ENCODE measurements at regions of chr20 and their contacts with region 1.

Region 1: GRCh38 chr20:62953839-62954703 is 1.6 kb downstream of the SLC17A9 start:
- DNase-seq: peak; percentile 94
- ATAC-seq: peak; percentile 82
- H3K4me3 ChIP-seq: peak overlapping the region; percentile 23 to 62 (median 54)
- H3K4me3 Mint-ChIP-seq: peak overlapping the region; percentile 85
- H3K27ac ChIP-seq: peak overlapping the region; percentile 82 to 91
- H3K27ac Mint-ChIP-seq: peak overlapping the region; percentile 92
- H3K4me1 ChIP-seq: peaks cover 31 to 47% of the 10 kb centered on the region in 2 donors
- H3K4me1 Mint-ChIP-seq: peaks cover 44% of the 10 kb centered on the region
- H3K27me3 ChIP-seq: no peaks in the 10 kb centered on the region
- H3K27me3 Mint-ChIP-seq: no peaks in the 10 kb centered on the region
- CTCF ChIP-seq: no peak

Region 2: GRCh38 chr20:62182613-62183425 is 771.3 kb before region 1 on chr20 and contains the start of gene MTG2:
- CTCF ChIA-PET with region 1: no interaction called
- POLR2A ChIA-PET with region 1: no interaction called
- intact Hi-C with region 1: loop called (anchors 5 kb)
- DNase-seq: peak; percentile 96
- ATAC-seq: peak; percentile 90
- H3K4me3 ChIP-seq: peak within 1 kb of the TSS; percentile 81 to 88 (median 84)
- H3K4me3 Mint-ChIP-seq: peak within 1 kb of the TSS; percentile 97
- H3K27ac ChIP-seq: peak within 1 kb of the TSS; percentile 86 to 97
- H3K27ac Mint-ChIP-seq: peak within 1 kb of the TSS; percentile 98
- H3K4me1 ChIP-seq: peaks cover 13 to 18% of the 10 kb centered on the region in 2 donors
- H3K4me1 Mint-ChIP-seq: peaks cover 39% of the 10 kb centered on the region
- H3K27me3 ChIP-seq: no peaks in the 10 kb centered on the region
- H3K27me3 Mint-ChIP-seq: no peaks in the 10 kb centered on the region
- CTCF ChIP-seq: no peak
- total RNA-seq, gene MTG2: 47.6 and 48.4 TPM in 2 replicates

Region 3: DNA sequence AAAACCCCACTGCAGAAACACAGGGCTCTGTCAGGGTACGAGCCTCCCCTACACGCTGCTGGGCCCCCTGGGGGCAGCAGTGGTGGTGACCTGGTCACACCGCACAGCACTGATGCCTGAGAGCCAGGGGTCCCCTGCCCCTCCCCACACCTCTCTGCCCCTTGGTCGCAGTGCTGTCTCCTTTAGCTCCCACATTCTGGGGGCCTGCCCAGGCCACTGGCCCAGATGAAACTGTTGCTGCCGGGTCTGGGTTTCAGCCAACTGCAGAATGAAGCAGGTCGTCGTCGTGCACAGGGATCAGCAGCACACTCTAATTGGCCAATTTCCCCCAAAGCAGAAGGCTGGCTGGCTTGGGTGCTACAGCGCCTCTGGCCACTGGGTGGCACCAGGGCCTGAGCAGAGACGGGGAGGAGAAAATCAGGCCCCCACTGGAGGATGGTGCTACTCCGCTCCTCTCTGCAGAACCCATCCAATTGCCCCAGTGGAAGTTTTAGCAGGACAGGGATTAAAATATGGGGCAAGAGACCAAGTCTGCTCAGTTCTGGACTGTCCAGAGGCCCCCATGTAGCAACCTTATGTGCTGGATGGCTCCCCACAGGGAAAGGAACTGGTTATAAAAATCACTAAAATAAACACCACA is 53.9 kb before region 1 on chr20:
- CTCF ChIA-PET with region 1: interaction called, 4 read pairs
- POLR2A ChIA-PET with region 1: no interaction called
- intact Hi-C with region 1: loop called (anchors 2 kb)
- DNase-seq: peak; percentile 82
- ATAC-seq: peak; percentile 96
- H3K4me3 ChIP-seq: no peak overlapping the region
- H3K4me3 Mint-ChIP-seq: peak overlapping the region; percentile 41
- H3K27ac ChIP-seq: no peak overlapping the region
- H3K27ac Mint-ChIP-seq: peak overlapping the region; percentile 90
- H3K4me1 ChIP-seq: peaks cover 12 to 20% of the 10 kb centered on the region in 2 donors
- H3K4me1 Mint-ChIP-seq: peaks cover 30% of the 10 kb centered on the region
- H3K27me3 ChIP-seq: no peaks in the 10 kb centered on the region
- H3K27me3 Mint-ChIP-seq: no peaks in the 10 kb centered on the region
- CTCF ChIP-seq: peak; percentile 89

Region 4: DNA sequence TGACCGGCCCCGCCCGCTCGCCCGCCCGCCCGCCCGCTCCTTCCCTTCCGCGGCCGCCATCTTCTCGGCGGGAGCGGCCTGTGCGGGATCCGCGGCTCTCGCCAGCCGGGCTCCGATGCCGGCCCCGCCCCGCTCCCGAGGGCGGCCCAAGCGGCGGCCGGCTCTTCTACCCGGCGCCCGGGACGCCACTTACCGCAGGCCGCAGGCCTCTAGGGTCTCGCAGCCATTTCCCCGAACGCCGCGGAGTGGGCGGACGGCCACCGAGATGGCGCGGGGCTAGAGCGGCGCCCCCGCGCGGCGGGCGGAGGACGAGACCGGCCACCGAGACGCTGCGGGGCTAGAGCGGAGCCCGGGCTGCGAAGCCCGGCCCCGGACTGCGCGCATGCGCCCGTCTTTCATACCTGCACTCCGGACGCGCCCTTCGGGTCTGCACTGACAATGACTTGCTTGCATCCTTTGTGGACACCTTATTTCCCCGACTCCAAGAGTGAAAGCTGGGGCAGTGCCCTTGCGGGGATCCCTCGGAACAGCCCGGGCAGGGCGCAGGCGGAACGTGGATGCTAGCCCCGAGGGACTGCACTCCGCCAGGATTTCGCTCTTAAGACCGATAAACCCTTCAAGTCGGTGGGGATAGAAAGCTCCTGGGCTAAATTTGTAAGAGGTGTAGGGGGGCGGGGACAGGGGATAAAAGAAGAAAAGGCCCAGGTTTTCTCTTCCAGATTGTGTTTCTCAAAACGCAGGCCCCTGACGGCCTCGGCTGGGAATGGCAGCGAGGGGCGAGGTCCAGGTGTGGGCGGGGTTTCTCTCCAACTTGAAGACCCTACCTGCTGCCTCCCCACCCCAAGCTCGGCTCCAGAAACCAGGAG is 27.6 kb before region 1 on chr20 and contains the start of gene DIDO1:
- CTCF ChIA-PET with region 1: interaction called, 6 read pairs
- POLR2A ChIA-PET with region 1: interaction called, 15 read pairs
- intact Hi-C with region 1: loop called (anchors 1 kb)
- DNase-seq: peak; percentile 94
- ATAC-seq: peak; percentile 89
- H3K4me3 ChIP-seq: peak within 1 kb of the TSS; percentile 86 to 99 (median 96)
- H3K4me3 Mint-ChIP-seq: peak within 1 kb of the TSS; percentile 95
- H3K27ac ChIP-seq: peak within 1 kb of the TSS; percentile 79 to 92
- H3K27ac Mint-ChIP-seq: peak within 1 kb of the TSS; percentile 94
- H3K4me1 ChIP-seq: peaks cover 55 to 73% of the 10 kb centered on the region in 2 donors
- H3K4me1 Mint-ChIP-seq: peaks cover 75% of the 10 kb centered on the region
- H3K27me3 ChIP-seq: no peaks in the 10 kb centered on the region
- H3K27me3 Mint-ChIP-seq: no peaks in the 10 kb centered on the region
- CTCF ChIP-seq: peak; percentile 75
- total RNA-seq, gene DIDO1: 124 and 128 TPM in 2 replicates

Region 5: DNA sequence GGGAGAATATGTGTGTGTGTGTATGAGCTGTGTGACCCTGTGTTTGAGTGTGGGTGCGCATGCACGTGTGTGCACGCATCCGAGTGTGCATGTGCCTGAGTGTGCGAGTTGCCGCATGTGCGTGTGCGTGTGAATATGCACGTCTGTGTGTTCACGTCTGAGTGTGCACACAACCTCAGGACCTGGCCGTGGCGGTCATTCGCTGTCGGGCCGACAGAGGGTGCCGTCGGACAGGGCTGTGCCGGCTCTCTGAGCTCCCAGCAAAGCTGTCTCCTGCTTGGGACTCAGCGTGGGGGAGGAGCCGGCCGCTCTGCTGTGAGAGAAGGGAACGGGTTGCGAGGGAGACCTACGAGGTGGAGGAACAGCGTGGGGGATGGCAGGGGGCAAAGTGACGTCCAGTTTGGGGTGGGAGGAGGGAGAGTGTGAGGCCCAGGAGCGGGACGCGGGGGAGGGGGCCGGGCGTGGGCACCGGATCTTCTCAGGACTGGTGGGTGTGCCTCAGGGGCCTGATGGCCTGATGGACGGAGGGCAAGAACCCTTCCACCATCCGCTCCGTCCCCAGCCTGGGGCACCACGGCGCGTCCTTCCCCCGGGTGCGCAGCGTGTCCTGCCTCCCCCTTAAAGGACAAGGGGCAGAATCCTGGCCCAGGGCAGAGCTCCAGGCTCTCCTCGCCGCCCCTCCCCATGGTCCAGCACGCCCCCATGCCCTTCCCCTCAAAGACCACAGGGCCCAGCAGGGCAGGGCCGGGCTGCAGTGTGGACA is 18.4 kb after region 1 on chr20:
- CTCF ChIA-PET with region 1: interaction called, 24 read pairs
- POLR2A ChIA-PET with region 1: interaction called, 8 read pairs
- intact Hi-C with region 1: loop called (anchors 1 kb)
- DNase-seq: peak; percentile 88
- ATAC-seq: peak; percentile 96
- H3K4me3 ChIP-seq: peak overlapping the region in 3 of 5 experiments; percentile 38 to 49 (median 45)
- H3K4me3 Mint-ChIP-seq: peak overlapping the region; percentile 82
- H3K27ac ChIP-seq: no peak overlapping the region
- H3K27ac Mint-ChIP-seq: peak overlapping the region; percentile 37
- H3K4me1 ChIP-seq: peaks cover 21 to 26% of the 10 kb centered on the region in 2 donors
- H3K4me1 Mint-ChIP-seq: peaks cover 32% of the 10 kb centered on the region
- H3K27me3 ChIP-seq: peaks cover 0 to 65% (median 28%) of the 10 kb centered on the region in 4 experiments
- H3K27me3 Mint-ChIP-seq: peaks cover 39% of the 10 kb centered on the region
- CTCF ChIP-seq: peak; percentile 85

Region 6: DNA sequence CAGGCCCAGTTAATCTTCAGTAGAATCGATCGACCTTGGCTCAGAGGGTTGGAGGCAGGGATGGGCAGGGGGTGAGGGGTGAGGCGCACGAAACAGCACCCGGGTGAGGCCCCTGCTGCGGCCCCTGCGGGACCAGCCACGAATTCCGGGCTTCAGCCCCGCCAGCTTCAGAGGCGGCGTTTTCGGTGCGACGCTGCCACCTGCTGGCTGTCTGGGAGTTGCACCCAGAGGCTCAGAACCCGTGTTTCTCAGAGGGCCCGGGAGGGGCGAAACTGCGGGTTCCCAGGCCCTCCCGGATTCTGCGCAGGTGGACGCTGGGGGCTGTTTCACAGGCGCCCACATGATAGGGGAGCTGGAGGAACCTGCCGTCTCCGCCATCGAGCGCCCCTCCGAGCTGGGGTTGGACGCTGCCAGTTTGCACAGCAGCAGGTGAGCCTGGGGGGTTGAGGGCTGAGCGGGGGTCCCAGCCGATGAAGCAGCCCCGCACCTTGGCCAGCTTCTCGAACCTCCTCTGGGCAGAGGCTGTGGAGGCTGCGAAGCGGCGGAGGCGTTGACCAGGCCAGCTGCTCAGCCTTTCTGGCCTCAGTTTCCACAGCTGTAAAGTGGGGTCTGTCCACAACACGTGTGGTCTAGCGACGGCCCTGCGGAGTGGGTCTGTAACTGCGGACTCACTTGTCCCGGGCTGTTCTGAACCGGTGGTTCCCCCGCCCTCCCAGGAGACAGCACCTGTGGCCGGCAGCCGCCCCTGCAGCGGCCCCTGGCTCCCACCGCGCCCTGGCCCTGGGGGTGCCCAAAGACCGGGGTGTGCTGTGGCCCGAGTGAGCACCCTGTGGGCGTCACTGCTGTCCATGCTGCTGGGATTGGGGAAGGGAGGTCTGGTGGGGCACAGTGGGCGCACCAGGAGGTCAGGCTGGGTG is 55.2 kb after region 1 on chr20:
- CTCF ChIA-PET with region 1: interaction called, 6 read pairs
- POLR2A ChIA-PET with region 1: no interaction called
- intact Hi-C with region 1: loop called (anchors 10 kb)
- DNase-seq: peak; percentile 89
- ATAC-seq: peak; percentile 80
- H3K4me3 ChIP-seq: peak overlapping the region in 1 of 5 experiments; percentile 42
- H3K4me3 Mint-ChIP-seq: peak overlapping the region; percentile 86
- H3K27ac ChIP-seq: no peak overlapping the region
- H3K27ac Mint-ChIP-seq: peak overlapping the region; percentile 21
- H3K4me1 ChIP-seq: peaks cover 52 to 57% of the 10 kb centered on the region in 2 donors
- H3K4me1 Mint-ChIP-seq: peaks cover 21% of the 10 kb centered on the region
- H3K27me3 ChIP-seq: peaks cover 0 to 84% (median 51%) of the 10 kb centered on the region in 4 experiments
- H3K27me3 Mint-ChIP-seq: peaks cover 47% of the 10 kb centered on the region
- CTCF ChIP-seq: peak; percentile 95

Region 7: DNA sequence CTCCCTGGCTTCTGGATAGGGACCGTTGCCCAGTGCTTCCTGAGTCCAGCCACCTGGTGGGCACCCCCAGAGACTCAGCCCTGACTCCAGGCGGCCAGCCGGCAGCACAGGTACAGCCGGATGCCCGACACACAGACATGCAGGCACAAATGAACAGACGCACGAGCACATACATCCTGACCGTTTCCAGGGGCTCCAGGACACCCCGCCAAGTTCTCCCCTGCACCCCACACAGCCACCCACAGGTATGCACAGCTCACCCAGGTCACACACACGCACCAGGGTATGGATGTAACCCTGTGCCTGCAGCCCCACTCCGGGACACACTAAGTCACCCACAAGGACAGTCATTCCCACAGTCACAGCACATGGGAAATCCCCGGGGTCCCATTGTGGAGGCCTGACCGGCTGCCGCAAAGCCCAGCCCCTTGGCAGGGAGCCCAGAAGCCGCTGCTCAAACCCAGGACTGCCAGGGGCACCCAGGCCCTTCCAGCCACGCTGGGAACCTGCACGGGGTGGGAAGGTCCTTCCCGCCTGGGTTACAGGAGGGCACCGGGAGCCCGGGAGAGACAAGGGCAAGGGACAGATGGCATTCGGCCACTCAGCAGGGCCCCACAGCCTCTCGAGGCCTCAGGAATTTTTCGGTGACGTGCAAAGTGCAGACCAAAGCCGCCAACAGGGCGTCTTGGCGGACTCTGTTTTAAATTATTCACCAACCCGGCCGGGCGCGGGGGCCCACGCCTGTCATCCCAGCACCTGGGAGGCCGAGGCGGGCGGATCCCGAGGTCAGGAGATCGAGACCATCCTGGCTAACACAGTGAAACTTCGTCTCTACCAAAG is 529.0 kb after region 1 on chr20:
- CTCF ChIA-PET with region 1: no interaction called
- POLR2A ChIA-PET with region 1: no interaction called
- intact Hi-C with region 1: no loop called
- DNase-seq: no peak
- ATAC-seq: no peak
- H3K4me3 ChIP-seq: no peak overlapping the region
- H3K4me3 Mint-ChIP-seq: no peak overlapping the region
- H3K27ac ChIP-seq: no peak overlapping the region
- H3K27ac Mint-ChIP-seq: peak overlapping the region; percentile 15
- H3K4me1 ChIP-seq: no peaks in the 10 kb centered on the region
- H3K4me1 Mint-ChIP-seq: peaks cover 1% of the 10 kb centered on the region
- H3K27me3 ChIP-seq: peaks cover 0 to 56% (median 5%) of the 10 kb centered on the region in 4 experiments
- H3K27me3 Mint-ChIP-seq: peaks cover 26% of the 10 kb centered on the region
- CTCF ChIP-seq: no peak

Measured in B cell (primary cell).